Dorsolateral prefrontal cortex (tissue), 120 donors: ENCODE measurements at regions of chr10 and their contacts with region 1.

Region 1: DNA sequence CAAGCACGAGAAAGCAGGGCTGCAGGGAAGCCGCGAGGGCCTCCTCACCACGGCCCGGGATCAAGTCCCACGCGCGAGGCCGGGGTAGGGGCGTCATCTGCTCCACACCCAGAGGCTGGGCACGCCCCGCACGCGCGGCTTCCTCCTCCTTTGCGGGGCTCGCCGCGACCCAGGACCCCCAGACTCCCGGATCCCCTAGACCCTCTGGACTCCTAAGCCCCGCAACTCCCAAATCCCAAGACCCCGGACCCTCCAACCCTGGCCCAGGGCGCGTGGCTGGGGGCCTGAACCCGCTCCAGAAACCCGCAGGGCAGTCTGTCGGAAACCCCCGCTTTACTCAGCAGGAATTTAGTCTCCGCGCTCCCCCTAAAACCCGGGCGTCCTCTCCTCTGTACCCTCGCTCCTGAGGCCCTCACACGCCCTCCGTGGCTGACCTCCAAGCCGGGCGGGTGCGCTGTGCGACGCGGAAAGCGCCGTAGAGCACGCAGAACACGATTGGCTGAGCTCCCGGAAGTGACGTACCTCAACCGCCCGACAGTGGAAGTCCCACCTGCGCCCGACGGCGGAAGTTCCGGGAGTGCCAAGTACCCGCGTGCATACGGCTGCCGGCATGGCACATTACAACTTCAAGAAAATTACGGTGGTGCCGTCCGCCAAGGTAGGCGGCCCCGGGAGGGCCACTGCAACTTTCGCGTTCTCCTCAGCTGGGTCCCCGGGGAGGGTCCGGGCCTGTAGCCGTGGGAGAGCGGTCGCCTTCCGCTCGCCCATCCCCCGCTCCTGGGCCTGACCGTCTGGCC is at the start of gene GTPBP4:
- DNase-seq: peak; percentile 97 to 99 (median 98)
- H3K4me3 ChIP-seq: peak within 1 kb of the TSS; percentile 71 to 100 (median 97)
- H3K27ac ChIP-seq: peak within 1 kb of the TSS in 57 of 59 donors; percentile 17 to 95 (median 84)
- H3K27me3 ChIP-seq: no peaks in the 10 kb centered on the region
- CTCF ChIP-seq: peak in 55 of 56 donors; percentile 29 to 77 (median 59)
- total RNA-seq, gene GTPBP4: 20.9 to 41.8 (median 31.2) TPM

Region 2: DNA sequence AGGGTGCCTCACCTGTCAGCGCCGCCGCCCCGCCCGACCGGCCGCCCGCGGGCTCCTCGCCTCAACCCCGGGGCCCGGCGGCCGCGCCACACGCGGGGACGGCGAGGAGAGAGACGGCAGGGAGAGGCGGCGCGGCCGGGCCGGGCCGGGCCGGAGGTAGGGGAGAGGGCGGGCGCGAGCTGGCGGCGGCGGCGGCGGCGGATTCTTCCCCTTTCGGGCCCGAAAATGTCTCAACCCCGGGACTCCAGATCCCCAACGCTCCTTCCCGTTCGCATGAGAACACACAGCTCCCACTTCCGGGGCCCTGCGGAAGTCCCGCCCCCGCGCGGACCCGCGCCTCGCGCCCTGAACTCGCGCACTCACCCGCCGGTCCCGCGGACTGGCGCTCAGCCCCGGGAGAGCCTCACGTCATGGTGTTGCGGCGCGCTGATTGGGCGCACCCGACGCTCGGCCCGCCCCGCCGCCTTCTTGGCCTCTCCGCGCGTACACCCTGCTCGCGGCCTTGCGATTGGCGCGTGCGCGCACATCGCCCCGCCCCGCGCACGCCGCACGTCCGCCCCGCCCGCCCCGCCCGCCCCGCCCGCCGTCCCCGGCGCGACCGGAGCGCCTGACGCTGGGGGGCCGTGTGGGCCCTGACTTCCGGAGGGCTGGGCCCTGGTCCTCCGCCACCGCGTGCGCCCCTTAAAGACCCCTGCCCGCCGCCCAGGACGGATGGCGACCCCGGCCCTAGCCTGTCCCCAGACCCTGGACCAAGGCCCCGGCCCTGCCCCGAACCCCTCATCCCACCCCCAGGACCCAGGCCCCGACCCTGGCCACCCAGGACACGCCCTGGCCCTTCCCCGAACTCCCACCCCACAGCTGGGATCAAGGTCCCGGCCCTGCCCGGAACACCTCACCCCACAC is 56.4 kb before region 1 on chr10 and contains the start of gene LARP4B:
- intact Hi-C with region 1: loop called (anchors 2 kb)
- DNase-seq: peak; percentile 95 to 99 (median 96)
- H3K4me3 ChIP-seq: peak within 1 kb of the TSS; percentile 46 to 89 (median 72)
- H3K27ac ChIP-seq: peak within 1 kb of the TSS in 57 of 59 donors; percentile 69 to 98 (median 92)
- H3K27me3 ChIP-seq: no peaks in the 10 kb centered on the region
- CTCF ChIP-seq: peak in 9 of 56 donors; percentile 12 to 34 (median 22)
- total RNA-seq, gene LARP4B: 62.8 to 97.1 (median 83.4) TPM

Region 3: GRCh38 chr10:1048732-1049424 is 60.8 kb after region 1 on chr10 and contains the start of gene IDI1:
- intact Hi-C with region 1: loop called (anchors 1 to 2 kb)
- DNase-seq: peak; percentile 95 to 99 (median 98)
- H3K4me3 ChIP-seq: peak within 1 kb of the TSS; percentile 64 to 99 (median 91)
- H3K27ac ChIP-seq: peak within 1 kb of the TSS; percentile 94 to 100 (median 100)
- H3K27me3 ChIP-seq: no peaks in the 10 kb centered on the region
- CTCF ChIP-seq: peak in 14 of 56 donors; percentile 5 to 46 (median 18)
- total RNA-seq, gene IDI1: 35.1 to 115 (median 59.2) TPM

Region 4: DNA sequence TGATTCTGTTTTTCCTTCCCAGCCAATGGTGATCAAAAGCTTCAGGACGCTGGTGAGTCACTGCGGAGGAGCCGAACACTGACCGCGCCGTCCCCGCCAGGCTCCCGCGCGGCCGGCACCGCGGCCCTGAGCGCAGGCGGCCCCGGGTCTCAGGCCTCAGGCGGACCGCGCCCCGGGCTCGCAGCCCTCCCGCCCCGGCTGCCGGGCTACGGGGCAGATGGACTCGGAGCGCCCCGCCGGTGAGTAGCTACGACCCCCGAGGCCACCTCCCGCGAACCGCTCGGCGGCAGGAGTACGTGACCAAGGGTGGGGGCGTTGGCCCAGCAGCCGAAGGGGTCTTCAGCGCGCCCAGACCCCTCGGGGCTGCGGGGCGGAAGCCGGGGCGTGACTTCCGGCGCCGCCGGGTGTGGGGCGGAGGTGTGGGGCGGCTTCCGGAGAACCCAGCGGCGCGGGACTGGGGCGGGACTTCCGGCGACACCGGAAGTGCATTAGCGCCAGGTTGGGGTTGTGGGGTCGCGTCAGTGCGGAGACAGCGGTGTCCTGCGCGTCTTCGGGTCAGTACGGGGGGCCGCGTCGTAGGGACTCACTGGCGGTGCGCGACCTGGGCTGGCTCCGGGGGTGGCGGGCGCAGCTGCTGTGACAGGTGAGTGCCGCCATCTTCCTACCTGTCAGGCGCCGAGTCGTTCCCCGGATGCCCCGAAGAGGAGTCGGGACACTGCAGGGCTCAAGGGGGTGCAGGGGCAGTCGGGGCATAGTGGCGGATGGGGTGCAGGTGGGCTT is 68.4 kb after region 1 on chr10 and contains the start of gene WDR37:
- intact Hi-C with region 1: loop called (anchors 1 to 2 kb)
- DNase-seq: peak; percentile 76 to 93 (median 86)
- H3K4me3 ChIP-seq: peak within 1 kb of the TSS; percentile 68 to 99 (median 95)
- H3K27ac ChIP-seq: peak within 1 kb of the TSS; percentile 83 to 100 (median 97)
- H3K27me3 ChIP-seq: no peaks in the 10 kb centered on the region
- CTCF ChIP-seq: peak in 13 of 56 donors; percentile 6 to 36 (median 18)
- total RNA-seq, gene WDR37: 39.0 to 104 (median 78.6) TPM

Region 5: DNA sequence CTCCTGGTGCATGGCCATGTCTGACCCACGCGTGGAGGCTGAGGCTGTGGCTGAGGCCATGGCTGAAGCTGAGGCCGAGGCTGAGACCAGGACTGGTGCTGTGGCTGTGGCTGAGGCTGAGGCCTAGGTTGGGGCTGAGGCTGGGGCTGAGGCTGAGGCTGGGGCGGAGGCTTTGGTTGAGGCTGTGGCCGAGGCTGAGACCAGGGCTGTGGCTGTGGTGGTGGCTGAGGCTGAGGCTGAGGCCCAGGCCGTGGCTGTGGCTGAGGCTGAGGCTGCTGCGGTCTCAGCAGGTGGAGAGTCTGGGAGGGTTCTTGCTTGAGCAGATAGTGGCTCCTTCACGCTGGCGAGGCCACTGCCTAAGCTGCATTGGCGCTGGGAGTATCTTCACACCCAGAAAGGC is 144.5 kb after region 1 on chr10:
- intact Hi-C with region 1: no loop called
- DNase-seq: no peak
- H3K4me3 ChIP-seq: no peak overlapping the region
- H3K27ac ChIP-seq: no peak overlapping the region
- H3K27me3 ChIP-seq: no peaks in the 10 kb centered on the region
- CTCF ChIP-seq: no peak